Common myeloid progenitor, CD34-positive (primary cell): ENCODE measurements at regions of chr2 and their contacts with region 1.

Region 1: DNA sequence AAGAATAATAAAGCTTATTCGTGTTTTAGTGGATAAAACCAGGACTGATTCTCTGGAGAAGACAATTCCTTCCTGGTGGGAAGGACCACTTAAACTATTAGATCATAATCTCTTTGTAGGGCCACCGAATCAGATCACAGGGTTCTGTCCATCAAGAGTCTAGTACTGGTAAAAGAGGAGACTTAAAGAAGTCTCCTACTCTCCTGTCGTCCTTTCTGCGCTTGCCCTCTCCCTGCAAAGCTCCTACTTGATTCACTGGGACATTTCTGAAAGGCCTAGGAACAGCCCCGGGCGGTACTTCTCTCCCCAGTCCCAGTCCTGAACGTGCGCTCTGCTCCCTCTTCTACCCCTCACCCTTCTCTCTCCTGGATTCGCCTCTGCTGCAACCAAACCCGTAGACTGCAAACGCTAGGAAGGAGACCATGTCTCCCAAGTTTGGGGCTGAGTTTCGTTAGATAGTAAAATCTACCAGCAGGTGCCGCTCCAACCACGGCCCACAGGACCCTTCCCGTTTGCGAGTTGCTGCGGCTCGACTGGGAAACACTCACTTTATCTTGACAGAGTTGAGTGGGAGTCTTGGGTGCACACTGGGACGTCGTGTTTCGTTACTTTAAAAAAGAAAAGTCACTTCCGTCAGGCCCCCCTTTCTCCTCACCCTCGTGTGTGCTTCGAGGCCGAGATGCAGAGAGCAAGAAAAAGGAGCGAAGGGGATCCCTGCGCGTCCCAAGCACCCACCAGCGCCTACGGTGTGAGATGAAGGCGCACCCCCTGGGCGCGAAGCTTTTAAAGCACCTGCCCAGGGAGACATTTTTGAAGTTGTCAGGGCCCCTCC is 923 bp downstream of the FIGLA start:
- DNase-seq: peak; percentile 75 to 83 (median 82)
- H3K4me3 ChIP-seq: peak overlapping the region in 4 of 7 experiments; percentile 11 to 56 (median 46)
- H3K27ac ChIP-seq: no peak overlapping the region
- H3K4me1 ChIP-seq: peaks cover 0 to 15% (median 6%) of the 10 kb centered on the region in 4 experiments
- H3K27me3 ChIP-seq: peaks cover 30 to 74% (median 38%) of the 10 kb centered on the region in 5 experiments

Region 2: DNA sequence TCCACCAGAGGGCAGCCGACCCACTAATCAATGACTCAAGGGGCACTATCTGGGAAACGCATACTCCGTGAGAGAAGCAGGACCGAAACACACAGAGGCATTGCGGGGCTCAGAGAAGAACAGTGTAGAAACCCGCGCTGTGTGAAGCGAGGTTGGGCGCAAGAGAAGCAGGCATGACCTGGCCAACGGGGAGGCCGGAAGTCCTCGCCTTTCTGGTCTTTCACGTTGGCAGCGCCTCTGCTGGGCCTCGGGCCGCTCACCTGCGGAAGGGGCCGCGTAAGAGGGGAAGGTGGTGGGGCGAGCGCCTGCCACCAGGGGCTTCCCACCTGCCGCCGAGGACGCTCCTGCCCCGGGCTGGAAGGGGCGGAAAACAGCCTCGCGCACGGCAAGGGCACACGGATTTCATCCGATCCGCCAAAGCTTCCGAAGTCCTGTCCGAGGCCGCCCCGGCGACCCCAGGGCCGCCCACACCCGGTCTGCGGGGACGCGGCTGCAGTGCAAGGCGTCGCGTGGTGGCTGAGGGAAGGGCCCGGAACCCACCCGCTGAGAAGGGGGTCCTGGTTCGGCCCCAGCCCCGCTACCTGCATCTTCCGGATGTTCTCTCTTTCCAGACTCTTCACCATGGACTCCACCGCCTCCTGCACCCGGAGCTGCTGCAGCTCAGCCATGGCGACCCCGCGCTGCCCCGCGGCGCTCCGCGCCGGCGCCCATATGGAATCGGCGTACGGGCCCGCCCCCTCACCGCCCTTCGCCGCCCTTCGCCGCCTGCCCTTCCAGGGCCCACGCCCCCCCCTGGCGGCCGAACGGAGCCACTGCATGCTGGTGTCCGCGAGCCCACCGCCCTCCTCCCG is 488.0 kb before region 1 on chr2 and contains the start of gene FAM136A:
- CTCF ChIA-PET with region 1: interaction called, 11 read pairs
- POLR2A ChIA-PET with region 1: no interaction called
- DNase-seq: peak; percentile 83 to 90 (median 89)
- H3K4me3 ChIP-seq: peak within 1 kb of the TSS; percentile 67 to 93 (median 79)
- H3K27ac ChIP-seq: peak within 1 kb of the TSS; percentile 33 to 65
- H3K4me1 ChIP-seq: peaks cover 0 to 13% (median 11%) of the 10 kb centered on the region in 4 experiments
- H3K27me3 ChIP-seq: no peaks in the 10 kb centered on the region

Region 3: GRCh38 chr2:70771446-70771845 is 18.1 kb before region 1 on chr2:
- CTCF ChIA-PET with region 1: interaction called, 16 read pairs
- POLR2A ChIA-PET with region 1: no interaction called
- DNase-seq: no peak
- H3K4me3 ChIP-seq: no peak overlapping the region
- H3K27ac ChIP-seq: no peak overlapping the region
- H3K4me1 ChIP-seq: peaks cover 0 to 21% (median 16%) of the 10 kb centered on the region in 4 experiments
- H3K27me3 ChIP-seq: peaks cover 5 to 54% (median 34%) of the 10 kb centered on the region in 5 experiments

Region 4: DNA sequence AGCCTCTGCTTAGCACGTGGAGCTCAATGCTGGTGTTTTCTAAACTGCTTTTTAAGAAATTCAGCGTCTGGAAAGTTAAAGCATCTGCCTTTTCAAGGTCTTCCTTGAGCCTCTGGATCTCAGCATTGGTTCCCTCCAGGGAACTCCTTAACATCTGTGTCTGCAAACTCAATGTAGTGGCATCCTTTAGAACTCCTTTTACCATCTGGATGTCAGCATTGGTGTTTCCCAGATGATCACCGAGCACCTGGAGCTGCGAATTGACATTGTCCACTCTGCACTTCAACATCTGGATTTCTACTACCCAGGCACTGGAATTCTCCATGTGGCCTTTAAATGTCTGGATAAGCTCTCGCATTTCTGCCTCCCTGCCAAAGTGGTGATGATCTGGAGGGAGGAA is 27.2 kb after region 1 on chr2:
- CTCF ChIA-PET with region 1: interaction called, 11 read pairs
- POLR2A ChIA-PET with region 1: no interaction called
- DNase-seq: no peak
- H3K4me3 ChIP-seq: no peak overlapping the region
- H3K27ac ChIP-seq: no peak overlapping the region
- H3K4me1 ChIP-seq: no peaks in the 10 kb centered on the region
- H3K27me3 ChIP-seq: peaks cover 0 to 11% (median 4%) of the 10 kb centered on the region in 5 experiments

Region 5: DNA sequence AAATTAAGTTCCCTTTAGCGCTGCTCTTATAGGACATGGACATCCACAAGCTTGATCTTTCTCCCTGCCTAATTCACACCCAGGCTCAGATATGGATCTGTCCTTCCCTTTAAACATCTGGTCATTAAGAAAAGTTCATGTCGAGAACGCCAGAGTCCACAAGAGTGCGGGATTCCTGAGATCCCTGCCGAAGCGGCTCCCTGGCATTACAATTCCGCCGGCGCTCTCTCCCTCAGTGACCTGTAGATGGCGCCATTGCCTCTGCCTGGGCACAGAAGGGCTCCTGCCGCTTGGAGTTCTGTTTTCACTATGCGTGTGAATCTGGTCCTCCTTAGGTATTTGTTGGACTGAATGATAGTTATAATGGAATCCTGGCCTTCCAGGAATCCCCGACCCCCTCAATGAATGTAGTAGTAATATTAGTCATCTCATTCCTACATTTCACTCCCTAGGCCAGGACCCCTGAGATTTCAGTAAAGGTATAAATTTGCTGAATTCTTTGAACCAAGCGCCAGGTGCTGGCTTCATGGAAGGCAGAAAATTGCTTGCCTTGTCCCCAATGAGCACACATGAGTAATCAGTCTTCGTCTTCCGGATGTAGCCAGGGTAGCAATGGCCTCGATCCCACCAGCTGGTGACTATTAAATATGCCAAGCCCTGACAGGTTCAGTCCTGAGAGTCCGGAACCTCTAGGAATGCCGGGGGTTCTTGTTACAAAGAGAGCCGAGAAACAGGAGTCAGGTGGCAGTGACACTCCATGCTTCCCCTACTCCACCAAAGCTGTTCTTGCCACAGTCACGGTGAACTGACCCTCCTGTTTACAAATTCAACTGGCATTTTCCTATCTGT is 72.5 kb after region 1 on chr2:
- CTCF ChIA-PET with region 1: interaction called, 17 read pairs
- POLR2A ChIA-PET with region 1: no interaction called
- DNase-seq: peak; percentile 65 to 73 (median 68)
- H3K4me3 ChIP-seq: no peak overlapping the region
- H3K27ac ChIP-seq: no peak overlapping the region
- H3K4me1 ChIP-seq: no peaks in the 10 kb centered on the region
- H3K27me3 ChIP-seq: peaks cover 10 to 52% (median 24%) of the 10 kb centered on the region in 5 experiments

Region 6: DNA sequence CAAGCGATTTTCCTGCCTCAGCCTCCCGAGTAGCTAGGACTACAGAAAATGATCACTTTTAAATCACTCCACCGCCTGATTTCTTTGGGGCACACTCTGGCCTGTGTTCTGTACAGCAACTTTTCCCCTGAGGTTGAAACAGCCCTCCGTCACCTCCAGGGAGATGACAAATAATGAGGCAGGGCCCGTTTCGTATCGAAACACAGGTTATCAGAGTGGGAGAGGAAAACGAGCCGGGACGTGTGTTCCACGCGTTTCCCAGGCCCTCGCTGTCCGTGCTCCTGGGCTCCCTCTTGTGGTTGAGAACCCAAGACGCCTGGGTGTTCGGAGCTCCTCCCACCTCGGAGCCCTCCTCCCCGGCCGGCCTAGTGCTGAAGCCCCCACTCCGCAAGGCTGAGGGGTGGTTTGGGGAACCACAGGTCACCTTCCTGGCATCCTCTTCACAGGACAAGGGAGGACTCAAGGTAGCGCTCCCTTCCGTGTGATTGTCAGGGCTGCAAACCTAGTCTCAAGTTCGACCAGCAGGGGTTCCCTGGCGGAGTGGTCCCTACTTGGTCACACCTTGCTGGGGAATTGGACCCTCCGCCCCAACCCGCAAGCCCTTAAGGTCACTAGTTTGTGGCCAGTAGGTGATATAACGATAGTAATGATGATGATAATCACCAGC is 158.9 kb after region 1 on chr2:
- CTCF ChIA-PET with region 1: interaction called, 14 read pairs
- POLR2A ChIA-PET with region 1: no interaction called
- DNase-seq: peak; percentile 70 to 79 (median 74)
- H3K4me3 ChIP-seq: peak overlapping the region in 4 of 7 experiments; percentile 33 to 65 (median 40)
- H3K27ac ChIP-seq: no peak overlapping the region
- H3K4me1 ChIP-seq: peaks cover 0 to 18% (median 9%) of the 10 kb centered on the region in 4 experiments
- H3K27me3 ChIP-seq: peaks cover 3 to 16% (median 11%) of the 10 kb centered on the region in 5 experiments